ENCODE measurements at regions of chr16 and their contacts with region 1.

Region 1: GRCh38 chr16:16009401-16009800 is 60.0 kb downstream of the ABCC1 start:
- DNase-seq: peak; percentile 81 to 83
- ATAC-seq: peak; percentile 83 to 89
- H3K4me3 ChIP-seq: no peak overlapping the region
- H3K27ac ChIP-seq: peak overlapping the region; percentile 66 to 87 (median 77)
- H3K4me1 ChIP-seq: peaks cover 32 to 34% of the 10 kb centered on the region in 2 donors
- H3K27me3 ChIP-seq: no peaks in the 10 kb centered on the region
- CTCF ChIP-seq: no peak
- POLR2A ChIP-seq: no peak

Region 2: DNA sequence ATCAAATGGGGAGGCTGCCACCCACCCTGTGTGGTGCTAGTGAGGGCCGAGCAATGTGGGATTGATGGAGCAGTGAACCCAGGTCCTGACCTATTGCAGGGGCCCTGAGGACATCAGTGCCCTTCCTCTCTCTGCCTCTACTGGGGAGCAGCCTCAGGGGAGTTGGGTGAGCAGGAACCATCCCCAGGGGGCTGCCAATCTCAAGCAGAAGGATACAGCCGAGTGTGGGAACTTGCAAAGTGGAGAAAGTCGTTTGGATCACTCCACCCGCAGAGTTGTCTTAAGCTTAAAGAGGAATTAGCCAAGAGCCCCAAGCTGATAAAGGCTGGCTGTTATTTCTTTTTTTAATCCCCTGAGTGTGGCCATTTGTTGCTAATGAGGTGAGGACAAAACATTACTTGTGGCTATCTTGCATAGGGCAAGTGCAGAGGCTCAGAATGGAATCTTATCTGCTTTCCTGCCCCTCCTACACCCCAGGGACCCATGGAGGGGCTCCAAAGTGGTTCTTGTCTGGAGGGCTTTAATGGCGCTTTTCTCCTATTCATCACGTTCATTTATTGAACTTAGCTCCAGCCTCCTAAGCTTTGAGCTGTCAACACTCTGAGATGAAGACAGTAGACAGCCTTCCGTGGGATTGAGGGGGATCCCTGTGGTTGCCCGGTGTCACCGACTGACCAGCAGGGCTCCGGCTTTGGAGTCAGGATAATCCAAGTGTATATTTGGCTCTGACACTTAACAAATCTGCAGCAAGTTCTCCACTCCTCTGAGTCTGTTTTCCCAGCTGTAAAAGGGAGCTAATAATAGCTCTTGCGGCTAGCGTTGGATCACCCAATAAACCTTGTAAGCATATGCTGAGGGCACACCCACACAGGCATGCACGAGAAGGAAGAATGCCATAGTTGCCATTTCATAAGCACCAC is 197.7 kb before region 1 on chr16:
- in situ Hi-C with region 1: no loop called
- intact Hi-C with region 1: no loop called
- DNase-seq: peak in 1 of 2 donors; percentile 35
- ATAC-seq: peak; percentile 76 to 93
- H3K4me3 ChIP-seq: no peak overlapping the region
- H3K27ac ChIP-seq: peak overlapping the region; percentile 39 to 64 (median 51)
- H3K4me1 ChIP-seq: peaks cover 13% of the 10 kb centered on the region in 2 donors
- H3K27me3 ChIP-seq: peaks cover 0 to 4% (median 0%) of the 10 kb centered on the region in 3 donors
- CTCF ChIP-seq: peak in 1 of 5 experiments; percentile 13
- POLR2A ChIP-seq: no peak

Region 3: DNA sequence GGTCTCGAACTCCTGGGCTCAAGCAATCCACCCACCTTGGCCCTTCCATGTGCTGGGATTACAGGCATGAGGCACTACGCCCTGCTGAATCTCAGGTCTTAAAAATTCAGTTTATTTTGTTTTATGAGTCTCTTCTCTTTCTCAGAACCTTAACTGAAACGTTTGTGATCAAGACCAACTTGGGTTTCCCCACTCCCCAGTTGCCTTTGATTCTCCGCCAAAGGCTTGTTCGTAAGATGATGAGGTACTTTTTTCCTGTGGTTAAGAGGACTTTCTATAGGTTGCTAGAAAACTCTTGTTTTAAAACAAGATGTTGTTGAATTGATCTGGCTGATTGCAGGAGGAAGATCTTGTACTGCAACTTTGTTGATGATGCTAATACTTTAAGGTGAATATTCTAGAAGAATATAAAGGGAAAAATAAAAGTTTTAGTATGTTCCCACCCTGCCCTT is 48.3 kb before region 1 on chr16:
- in situ Hi-C with region 1: no loop called
- intact Hi-C with region 1: no loop called
- DNase-seq: no peak
- ATAC-seq: no peak
- H3K4me3 ChIP-seq: no peak overlapping the region
- H3K27ac ChIP-seq: peak overlapping the region in 3 of 4 donors; percentile 27 to 91 (median 54)
- H3K4me1 ChIP-seq: peaks cover 43 to 59% of the 10 kb centered on the region in 2 donors
- H3K27me3 ChIP-seq: no peaks in the 10 kb centered on the region
- CTCF ChIP-seq: no peak
- POLR2A ChIP-seq: no peak

Region 4: GRCh38 chr16:15988268-15989013 is 21.0 kb before region 1 on chr16:
- in situ Hi-C with region 1: no loop called
- intact Hi-C with region 1: loop called (anchors 1 kb)
- DNase-seq: no peak
- ATAC-seq: peak; percentile 9 to 24
- H3K4me3 ChIP-seq: no peak overlapping the region
- H3K27ac ChIP-seq: peak overlapping the region; percentile 69 to 92 (median 80)
- H3K4me1 ChIP-seq: peaks cover 54 to 56% of the 10 kb centered on the region in 2 donors
- H3K27me3 ChIP-seq: no peaks in the 10 kb centered on the region
- CTCF ChIP-seq: no peak
- POLR2A ChIP-seq: no peak

Measured in gastrocnemius medialis (tissue), 4 donors.